ENCODE measurements at regions of chr9 and their contacts with region 1.

Region 1: DNA sequence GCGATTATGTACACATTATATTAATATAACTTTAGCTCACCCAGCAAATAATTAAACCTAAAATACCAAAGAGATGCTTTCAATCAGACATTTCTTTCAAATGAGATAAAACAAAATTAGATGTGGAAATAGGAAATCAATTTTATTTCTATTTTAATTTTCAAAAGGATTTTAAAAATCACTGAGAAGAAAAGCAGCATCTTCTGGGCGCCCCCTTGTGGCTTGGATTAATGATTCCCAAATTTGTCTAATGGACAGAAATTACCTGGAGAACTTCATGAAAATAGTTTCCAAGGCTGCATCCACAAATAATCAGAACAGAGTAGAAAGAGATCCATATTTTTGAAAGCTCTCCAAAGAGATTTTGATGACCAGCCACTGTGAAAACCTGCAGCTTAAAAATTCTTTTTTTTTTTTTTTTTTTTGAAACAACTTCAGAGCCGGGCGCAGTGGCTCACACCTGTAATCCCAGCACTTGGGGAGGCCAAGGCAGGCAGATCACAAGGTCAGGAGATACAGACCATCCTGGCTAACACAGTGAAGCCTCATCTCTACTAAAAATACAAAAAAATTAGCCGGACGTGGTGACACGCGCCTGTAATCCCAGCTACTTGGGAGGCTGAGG is 50.9 kb upstream of the CEMIP2 start:
- DNase-seq: no peak
- ATAC-seq: no peak
- H3K4me3 ChIP-seq: no peak overlapping the region
- H3K27ac ChIP-seq: no peak overlapping the region
- H3K4me1 ChIP-seq: peaks cover 0 to 4% of the 10 kb centered on the region in 2 donors
- H3K27me3 ChIP-seq: no peaks in the 10 kb centered on the region

Region 2: GRCh38 chr9:71179183-71179582 is 640.0 kb before region 1 on chr9:
- intact Hi-C with region 1: no loop called
- DNase-seq: no peak
- ATAC-seq: no peak
- H3K4me3 ChIP-seq: no peak overlapping the region
- H3K27ac ChIP-seq: no peak overlapping the region
- H3K4me1 ChIP-seq: no peaks in the 10 kb centered on the region
- H3K27me3 ChIP-seq: no peaks in the 10 kb centered on the region

Region 3: GRCh38 chr9:71793386-71794105 is 25.7 kb before region 1 on chr9:
- intact Hi-C with region 1: loop called in 1 of 2 experiments (anchors 2 kb)
- DNase-seq: no peak
- ATAC-seq: no peak
- H3K4me3 ChIP-seq: no peak overlapping the region
- H3K27ac ChIP-seq: no peak overlapping the region
- H3K4me1 ChIP-seq: no peaks in the 10 kb centered on the region
- H3K27me3 ChIP-seq: no peaks in the 10 kb centered on the region

Region 4: GRCh38 chr9:71839665-71840064 is 20.4 kb after region 1 on chr9:
- intact Hi-C with region 1: loop called in 1 of 2 experiments (anchors 1 kb)
- DNase-seq: no peak
- ATAC-seq: no peak
- H3K4me3 ChIP-seq: no peak overlapping the region
- H3K27ac ChIP-seq: no peak overlapping the region
- H3K4me1 ChIP-seq: no peaks in the 10 kb centered on the region
- H3K27me3 ChIP-seq: no peaks in the 10 kb centered on the region

Region 5: DNA sequence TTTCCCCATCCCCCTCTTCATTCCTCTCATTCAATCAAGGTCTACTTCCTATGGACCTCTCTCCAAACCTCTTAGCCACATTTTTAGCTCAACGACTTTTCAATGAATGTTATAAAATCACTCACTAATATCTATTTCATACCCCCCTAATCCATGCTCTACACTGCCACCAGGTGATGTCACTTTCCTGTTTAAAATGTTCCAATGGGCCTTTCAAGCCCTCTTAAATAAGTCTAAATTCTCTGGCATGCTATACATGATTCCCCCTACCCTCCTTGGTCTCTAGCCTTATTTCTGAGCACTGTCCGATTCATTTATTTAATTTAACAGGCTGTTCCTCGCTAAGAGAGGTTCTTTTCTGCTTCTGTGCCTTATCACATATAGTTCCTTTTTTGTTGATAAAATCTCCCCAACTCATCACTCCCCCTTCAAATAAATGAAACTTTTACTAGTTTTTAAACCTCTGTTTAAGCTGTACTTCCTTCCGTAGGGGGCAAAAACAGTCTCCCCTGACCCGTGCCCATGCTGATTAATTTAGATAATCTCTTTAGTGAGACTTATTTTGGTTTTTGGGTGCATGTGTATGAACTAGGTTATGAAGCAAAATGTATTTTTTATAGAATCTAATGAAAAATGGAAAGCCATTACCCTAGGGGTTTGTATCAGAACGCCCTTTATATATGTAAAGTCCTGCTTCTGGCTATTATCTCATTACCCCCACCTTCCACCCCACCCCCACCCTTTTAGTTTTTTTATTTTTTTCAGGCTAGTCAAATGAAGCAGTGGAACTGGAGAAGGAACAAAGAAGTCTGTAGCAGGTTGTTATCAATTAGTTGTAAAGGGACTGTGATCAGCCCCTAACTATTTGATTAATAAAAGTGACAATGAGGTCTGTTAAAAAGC is 82.7 kb after region 1 on chr9:
- intact Hi-C with region 1: no loop called
- DNase-seq: no peak
- ATAC-seq: no peak
- H3K4me3 ChIP-seq: no peak overlapping the region
- H3K27ac ChIP-seq: no peak overlapping the region
- H3K4me1 ChIP-seq: peaks cover 0 to 6% of the 10 kb centered on the region in 2 donors
- H3K27me3 ChIP-seq: no peaks in the 10 kb centered on the region

Region 6: DNA sequence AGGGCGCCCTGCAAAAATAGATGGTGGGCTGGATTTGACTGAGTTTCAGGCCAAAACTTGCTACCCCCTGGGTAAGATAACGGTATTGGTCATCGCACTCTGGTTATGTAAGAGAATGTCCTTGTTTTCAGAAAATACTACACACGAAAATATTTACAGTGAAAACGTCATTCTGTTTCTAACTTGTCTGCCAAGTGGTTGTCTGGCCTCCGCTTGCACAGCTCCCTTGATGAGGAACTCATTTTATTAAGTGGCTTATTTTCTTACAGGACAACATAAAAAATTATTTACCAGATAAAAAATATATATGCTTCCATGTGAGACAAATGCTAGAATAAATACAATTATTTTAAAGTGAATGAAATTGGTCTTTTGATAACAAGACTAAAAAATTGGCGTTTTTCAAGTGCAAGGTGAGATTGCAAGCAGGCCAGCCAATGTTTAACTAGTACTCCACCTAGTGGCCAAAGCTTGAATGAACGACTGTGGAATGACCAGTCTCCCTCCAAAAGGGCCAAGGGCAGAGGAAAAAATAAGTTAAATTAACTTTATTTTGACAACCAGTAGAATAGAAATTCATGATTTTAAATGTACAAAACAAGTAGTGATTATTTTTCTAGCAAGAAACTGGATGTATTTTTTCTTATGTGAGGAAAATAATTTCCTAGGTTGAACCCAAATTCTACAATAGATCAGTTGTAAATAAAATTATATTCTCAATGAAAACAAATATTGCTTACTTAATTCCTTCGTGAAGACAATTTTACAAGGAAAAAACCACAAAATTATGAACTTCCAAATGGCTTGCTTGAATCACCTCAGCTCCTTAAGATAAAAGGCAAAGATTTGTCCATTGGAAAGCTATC is 452.6 kb after region 1 on chr9:
- intact Hi-C with region 1: loop called in 1 of 2 experiments (anchors 10 kb)
- DNase-seq: no peak
- ATAC-seq: peak; percentile 74
- H3K4me3 ChIP-seq: no peak overlapping the region
- H3K27ac ChIP-seq: no peak overlapping the region
- H3K4me1 ChIP-seq: no peaks in the 10 kb centered on the region
- H3K27me3 ChIP-seq: no peaks in the 10 kb centered on the region